ENCODE measurements at regions of chr12 and their contacts with region 1.

Region 1: DNA sequence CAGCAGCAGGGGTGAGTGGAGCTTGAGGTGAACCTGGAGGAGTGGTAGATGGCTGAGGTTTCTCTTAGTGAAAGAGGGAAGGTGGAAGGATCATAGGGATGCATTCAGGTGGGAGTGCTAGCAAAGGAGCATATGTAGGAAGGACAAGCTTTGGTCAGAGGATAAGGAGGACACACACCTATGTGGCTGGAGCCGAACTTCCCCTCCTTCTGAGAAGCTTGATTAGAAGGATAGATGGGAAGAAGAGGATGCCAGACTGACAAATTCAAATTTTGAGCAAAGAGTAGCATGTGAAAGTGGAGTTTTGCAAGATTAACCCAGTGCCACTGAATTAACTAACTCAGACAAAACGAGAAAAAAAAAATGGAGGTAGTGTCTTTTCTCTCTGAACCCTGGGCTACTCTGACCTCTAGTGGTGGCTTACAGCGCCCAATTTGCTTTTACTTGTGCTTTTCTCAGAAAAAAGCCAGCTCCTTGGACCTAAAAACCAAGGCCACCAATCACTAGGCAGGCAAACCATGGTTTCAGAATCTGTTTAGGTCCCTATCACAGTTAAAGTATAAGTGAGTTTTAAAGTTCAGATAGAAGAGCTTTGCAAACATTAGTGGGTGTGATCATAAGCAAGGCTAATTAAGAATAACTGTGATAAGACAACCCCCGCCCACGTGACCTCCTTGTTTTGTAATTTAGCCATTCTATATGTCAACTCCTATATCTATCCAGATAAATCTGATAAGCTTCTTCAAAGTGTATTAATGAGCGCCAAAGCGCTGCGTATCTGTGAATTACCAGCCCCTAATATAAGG is 15.5 kb downstream of the EMP1 start:
- DNase-seq: peak; percentile 84
- ATAC-seq: peak; percentile 62
- H3K4me3 Mint-ChIP-seq: no peak overlapping the region
- H3K27ac Mint-ChIP-seq: peak overlapping the region; percentile 65
- H3K4me1 Mint-ChIP-seq: peaks cover 44% of the 10 kb centered on the region
- H3K27me3 Mint-ChIP-seq: no peaks in the 10 kb centered on the region

Region 2: GRCh38 chr12:12916135-12916944 is 295.7 kb before region 1 on chr12:
- CTCF ChIA-PET with region 1: interaction called, 82 read pairs
- POLR2A ChIA-PET with region 1: interaction called, 5 read pairs
- DNase-seq: peak; percentile 90
- ATAC-seq: peak; percentile 99
- H3K4me3 Mint-ChIP-seq: no peak overlapping the region
- H3K27ac Mint-ChIP-seq: no peak overlapping the region
- H3K4me1 Mint-ChIP-seq: peaks cover 10% of the 10 kb centered on the region
- H3K27me3 Mint-ChIP-seq: peaks cover 17% of the 10 kb centered on the region

Region 3: GRCh38 chr12:13062669-13063068 is 149.4 kb before region 1 on chr12:
- CTCF ChIA-PET with region 1: interaction called, 10 read pairs
- POLR2A ChIA-PET with region 1: no interaction called
- DNase-seq: no peak
- ATAC-seq: no peak
- H3K4me3 Mint-ChIP-seq: no peak overlapping the region
- H3K27ac Mint-ChIP-seq: no peak overlapping the region
- H3K4me1 Mint-ChIP-seq: peaks cover 8% of the 10 kb centered on the region
- H3K27me3 Mint-ChIP-seq: no peaks in the 10 kb centered on the region

Region 4: DNA sequence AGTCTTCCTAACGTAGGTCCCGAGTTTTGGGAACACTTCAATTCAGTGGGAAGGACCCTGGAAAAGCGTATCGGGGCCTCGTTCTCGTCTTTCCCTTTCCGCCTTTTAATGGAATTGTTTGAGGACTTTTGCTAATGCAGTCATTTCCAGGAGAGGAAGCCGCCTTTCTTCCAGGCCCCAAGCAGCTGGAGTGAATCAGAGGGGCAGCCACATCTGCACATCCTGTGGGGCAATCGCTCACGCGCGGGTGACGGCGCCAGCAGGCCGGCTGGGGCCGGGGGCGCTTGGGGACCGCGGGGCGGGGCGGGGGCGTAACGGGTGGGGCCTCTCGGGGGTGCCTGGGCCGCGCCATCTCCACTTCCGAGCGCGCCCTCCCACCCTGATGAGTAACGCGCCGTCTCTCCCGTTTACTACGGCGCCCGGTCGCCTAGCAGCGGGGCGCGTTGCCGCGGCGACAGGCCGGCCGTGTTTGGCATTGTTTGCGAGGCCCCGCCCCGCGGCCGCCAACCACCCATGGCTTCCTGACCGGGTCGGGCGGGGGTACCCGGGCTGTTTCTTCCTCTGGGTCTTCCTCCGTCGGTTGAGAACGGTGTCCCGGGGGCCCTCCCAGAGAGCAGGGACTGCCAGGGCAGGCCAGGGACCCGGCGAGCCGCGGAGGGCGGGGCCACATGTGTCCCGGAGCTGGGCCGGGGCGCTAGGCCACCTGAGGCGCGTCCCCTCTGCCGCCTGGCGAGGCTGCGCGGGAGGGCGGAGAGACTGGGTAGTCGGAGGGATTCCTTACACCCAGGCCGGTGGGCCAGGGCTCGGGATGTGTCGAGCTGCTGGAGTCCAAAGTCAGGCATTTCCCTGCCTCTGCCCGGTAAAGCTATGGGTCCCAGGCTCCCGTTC is 110.9 kb before region 1 on chr12:
- CTCF ChIA-PET with region 1: interaction called, 204 read pairs
- POLR2A ChIA-PET with region 1: interaction called, 9 read pairs
- DNase-seq: peak; percentile 93
- ATAC-seq: peak; percentile 88
- H3K4me3 Mint-ChIP-seq: peak overlapping the region; percentile 72
- H3K27ac Mint-ChIP-seq: peak overlapping the region; percentile 79
- H3K4me1 Mint-ChIP-seq: peaks cover 43% of the 10 kb centered on the region
- H3K27me3 Mint-ChIP-seq: no peaks in the 10 kb centered on the region

Region 5: GRCh38 chr12:13190275-13190674 is 21.8 kb before region 1 on chr12:
- CTCF ChIA-PET with region 1: interaction called, 33 read pairs
- POLR2A ChIA-PET with region 1: no interaction called
- DNase-seq: no peak
- ATAC-seq: no peak
- H3K4me3 Mint-ChIP-seq: no peak overlapping the region
- H3K27ac Mint-ChIP-seq: no peak overlapping the region
- H3K4me1 Mint-ChIP-seq: peaks cover 6% of the 10 kb centered on the region
- H3K27me3 Mint-ChIP-seq: peaks cover 44% of the 10 kb centered on the region

Region 6: DNA sequence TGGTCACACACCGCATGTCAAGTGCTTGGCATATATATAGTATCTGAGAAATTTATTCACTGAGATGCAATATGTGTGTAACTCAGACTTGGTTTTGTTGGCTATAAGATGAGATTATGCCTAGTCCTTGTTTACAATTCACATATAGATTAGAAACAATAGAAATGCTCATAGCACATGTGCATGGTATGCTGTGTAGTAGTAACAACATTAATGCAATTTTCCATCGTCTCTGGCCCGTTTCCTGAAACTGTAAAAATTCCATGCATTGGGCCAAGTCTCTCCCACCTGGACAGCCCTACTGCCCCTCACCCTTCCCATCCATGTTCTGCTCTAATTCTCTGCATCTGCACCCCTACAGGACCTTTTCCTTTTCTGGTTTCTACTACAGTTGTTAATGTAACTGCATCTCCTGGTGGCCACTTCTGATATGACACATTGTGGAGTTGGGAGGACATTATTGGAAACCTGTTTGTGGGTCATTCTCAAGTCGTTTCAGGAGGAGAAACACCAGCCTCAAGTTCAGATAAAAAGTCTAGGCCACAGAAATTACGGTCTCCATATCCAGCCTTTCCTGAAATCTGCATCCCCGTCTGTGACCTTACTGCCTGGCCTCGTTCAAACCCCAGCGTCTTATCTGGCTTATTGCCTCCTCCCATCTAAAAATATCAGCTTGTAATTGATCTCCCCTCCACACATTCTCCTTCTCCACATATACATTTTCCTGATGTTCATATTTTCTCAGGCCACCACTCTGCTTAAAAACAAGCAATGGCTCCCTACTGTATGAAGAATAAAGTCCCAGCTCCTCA is 22.0 kb after region 1 on chr12:
- CTCF ChIA-PET with region 1: interaction called, 13 read pairs
- POLR2A ChIA-PET with region 1: no interaction called
- DNase-seq: peak; percentile 60
- ATAC-seq: peak; percentile 67
- H3K4me3 Mint-ChIP-seq: no peak overlapping the region
- H3K27ac Mint-ChIP-seq: no peak overlapping the region
- H3K4me1 Mint-ChIP-seq: no peaks in the 10 kb centered on the region
- H3K27me3 Mint-ChIP-seq: peaks cover 18% of the 10 kb centered on the region

Region 7: GRCh38 chr12:13304924-13305323 is 92.9 kb after region 1 on chr12:
- CTCF ChIA-PET with region 1: no interaction called
- POLR2A ChIA-PET with region 1: no interaction called
- DNase-seq: no peak
- ATAC-seq: no peak
- H3K4me3 Mint-ChIP-seq: no peak overlapping the region
- H3K27ac Mint-ChIP-seq: no peak overlapping the region
- H3K4me1 Mint-ChIP-seq: no peaks in the 10 kb centered on the region
- H3K27me3 Mint-ChIP-seq: peaks cover 25% of the 10 kb centered on the region

Region 8: GRCh38 chr12:13452955-13453570 is 241.0 kb after region 1 on chr12:
- CTCF ChIA-PET with region 1: no interaction called
- POLR2A ChIA-PET with region 1: no interaction called
- DNase-seq: peak; percentile 6
- ATAC-seq: no peak
- H3K4me3 Mint-ChIP-seq: no peak overlapping the region
- H3K27ac Mint-ChIP-seq: no peak overlapping the region
- H3K4me1 Mint-ChIP-seq: no peaks in the 10 kb centered on the region
- H3K27me3 Mint-ChIP-seq: no peaks in the 10 kb centered on the region